Heart left ventricle (tissue), 16 donors: ENCODE measurements at regions of chr12 and their contacts with region 1.

Region 1: GRCh38 chr12:122225683-122226407 is at the start of gene DIABLO:
- DNase-seq: peak; percentile 100
- ATAC-seq: peak; percentile 98 to 99 (median 98)
- H3K4me3 ChIP-seq: peak within 1 kb of the TSS; percentile 70 to 99 (median 93)
- H3K27ac ChIP-seq: peak within 1 kb of the TSS; percentile 81 to 99 (median 96)
- H3K4me1 ChIP-seq: peaks cover 6 to 34% (median 26%) of the 10 kb centered on the region in 12 donors
- H3K27me3 ChIP-seq: no peaks in the 10 kb centered on the region
- CTCF ChIP-seq: no peak
- POLR2A ChIP-seq: peak; percentile 44 to 95
- total RNA-seq, gene DIABLO: 27.9 to 64.4 (median 34.8) TPM

Region 2: GRCh38 chr12:122265931-122266771 is 40.3 kb after region 1 on chr12 and contains the start of gene VPS33A:
- intact Hi-C with region 1: loop called in 2 of 10 experiments (anchors 2 kb)
- DNase-seq: peak; percentile 95 to 98 (median 98)
- ATAC-seq: peak; percentile 96 to 98 (median 98)
- H3K4me3 ChIP-seq: peak within 1 kb of the TSS; percentile 71 to 98 (median 86)
- H3K27ac ChIP-seq: peak within 1 kb of the TSS; percentile 39 to 95 (median 86)
- H3K4me1 ChIP-seq: peaks cover 0 to 21% (median 8%) of the 10 kb centered on the region in 12 donors
- H3K27me3 ChIP-seq: no peaks in the 10 kb centered on the region
- CTCF ChIP-seq: peak in 1 of 12 donors; percentile 14
- POLR2A ChIP-seq: peak in 1 of 2 donors; percentile 57
- total RNA-seq, gene VPS33A: 7.3 to 16.7 (median 13.2) TPM

Region 3: GRCh38 chr12:122382919-122383350 is 157.1 kb after region 1 on chr12:
- intact Hi-C with region 1: no loop called
- DNase-seq: no peak
- ATAC-seq: peak in 2 of 4 donors; percentile 9 to 32
- H3K4me3 ChIP-seq: peak overlapping the region in 2 of 12 donors; percentile 7 to 12
- H3K27ac ChIP-seq: peak overlapping the region in 2 of 12 donors; percentile 9 to 86
- H3K4me1 ChIP-seq: peaks cover 0 to 10% (median 0%) of the 10 kb centered on the region in 12 donors
- H3K27me3 ChIP-seq: no peaks in the 10 kb centered on the region
- CTCF ChIP-seq: no peak
- POLR2A ChIP-seq: no peak

Region 4: GRCh38 chr12:122871851-122872780 is 646.3 kb after region 1 on chr12:
- intact Hi-C with region 1: no loop called
- DNase-seq: peak; percentile 68 to 81 (median 78)
- ATAC-seq: peak; percentile 29 to 71 (median 58)
- H3K4me3 ChIP-seq: peak overlapping the region in 11 of 12 donors; percentile 16 to 60 (median 50)
- H3K27ac ChIP-seq: peak overlapping the region; percentile 83 to 93 (median 87)
- H3K4me1 ChIP-seq: peaks cover 17 to 99% (median 85%) of the 10 kb centered on the region in 12 donors
- H3K27me3 ChIP-seq: no peaks in the 10 kb centered on the region
- CTCF ChIP-seq: no peak
- POLR2A ChIP-seq: no peak